ENCODE measurements at regions of chr4 and their contacts with region 1.

Region 1: DNA sequence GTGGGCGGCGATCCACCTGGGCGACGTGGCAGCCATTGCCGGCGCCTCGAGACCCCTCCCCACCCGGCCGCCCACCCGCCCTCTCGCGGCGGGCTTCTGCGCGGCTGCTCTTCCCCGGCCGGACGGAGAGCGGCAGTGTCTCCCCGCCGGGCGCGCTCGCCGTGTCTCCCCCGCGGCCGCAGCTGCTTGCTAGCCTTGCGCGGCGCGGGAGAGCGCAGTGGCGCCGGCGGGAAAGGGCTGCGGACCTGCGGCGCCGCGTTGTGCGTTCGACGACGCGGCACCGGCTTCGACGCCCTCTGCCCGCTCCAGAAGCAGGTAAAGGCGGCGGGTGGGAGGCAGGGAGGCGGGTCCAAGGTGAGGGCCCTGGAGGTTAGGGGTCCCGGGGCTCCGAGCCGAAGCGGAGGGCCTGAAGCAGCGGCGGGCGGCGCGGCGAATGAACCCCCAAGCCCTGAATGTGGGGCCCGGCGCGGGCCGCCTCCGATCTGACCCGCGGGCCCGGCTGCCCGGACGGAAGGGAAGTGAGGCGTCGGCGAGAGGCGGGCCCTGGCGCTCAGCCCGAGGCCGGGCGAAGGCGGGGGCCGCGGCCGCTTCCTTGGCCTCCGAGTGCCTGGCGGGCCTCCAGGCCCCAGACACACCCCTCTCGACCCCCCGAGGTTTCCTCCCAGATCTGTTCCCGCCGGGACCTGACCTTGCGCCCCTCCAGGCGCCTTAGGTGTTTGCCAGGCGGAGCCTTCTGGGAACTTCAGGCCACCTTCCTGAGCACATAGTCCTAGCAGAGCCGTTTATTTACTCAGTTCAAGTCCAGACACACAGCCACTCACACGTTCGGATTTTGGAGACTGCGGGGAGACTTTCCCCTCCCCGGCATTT is at the start of gene N4BP2:
- DNase-seq: peak; percentile 72 to 90
- H3K4me3 ChIP-seq: peak within 1 kb of the TSS; percentile 95 to 99
- H3K27ac ChIP-seq: peak within 1 kb of the TSS; percentile 97 to 100
- H3K4me1 ChIP-seq: peaks cover 0 to 28% (median 9%) of the 10 kb centered on the region in 4 donors
- H3K27me3 ChIP-seq: no peaks in the 10 kb centered on the region
- CTCF ChIP-seq: peak; percentile 52 to 84

Region 2: DNA sequence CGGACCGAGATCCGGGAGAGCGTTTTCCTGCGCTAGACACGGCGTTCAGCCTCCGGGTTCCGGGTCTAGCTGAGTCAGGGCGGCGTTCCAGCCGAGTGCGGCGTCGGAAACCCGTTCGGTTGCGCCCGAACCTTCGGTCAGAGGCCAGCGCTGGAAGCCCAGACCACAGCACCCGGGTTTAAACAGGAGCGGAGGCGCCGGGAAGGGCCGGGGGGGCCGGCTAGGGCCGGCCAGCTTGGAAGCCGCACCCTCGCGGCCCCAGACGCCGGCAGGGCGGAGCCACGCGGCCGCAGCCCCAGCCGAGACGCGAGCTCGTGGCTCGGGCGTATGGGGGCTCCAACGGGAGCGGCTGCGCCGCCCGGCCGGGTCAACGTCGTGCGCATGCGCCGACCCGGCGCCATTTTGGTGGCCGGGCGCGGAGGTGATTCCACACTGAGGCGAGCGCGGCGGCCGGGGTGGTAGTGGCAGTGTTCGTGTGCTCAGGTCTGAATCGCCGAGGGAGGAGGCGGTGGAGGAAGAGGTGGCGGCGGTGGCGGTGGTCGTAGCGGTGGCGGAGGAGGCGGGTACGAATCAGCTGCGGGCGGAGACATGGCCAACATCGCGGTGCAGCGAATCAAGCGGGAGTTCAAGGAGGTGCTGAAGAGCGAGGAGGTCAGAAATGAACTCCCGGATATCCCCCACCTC is 359.1 kb before region 1 on chr4 and contains the start of gene UBE2K:
- intact Hi-C with region 1: loop called (anchors 5 kb)
- DNase-seq: peak; percentile 80 to 94
- H3K4me3 ChIP-seq: peak within 1 kb of the TSS; percentile 84 to 95
- H3K27ac ChIP-seq: peak within 1 kb of the TSS; percentile 90 to 91
- H3K4me1 ChIP-seq: peaks cover 0 to 46% (median 7%) of the 10 kb centered on the region in 4 donors
- H3K27me3 ChIP-seq: no peaks in the 10 kb centered on the region
- CTCF ChIP-seq: no peak

Region 3: DNA sequence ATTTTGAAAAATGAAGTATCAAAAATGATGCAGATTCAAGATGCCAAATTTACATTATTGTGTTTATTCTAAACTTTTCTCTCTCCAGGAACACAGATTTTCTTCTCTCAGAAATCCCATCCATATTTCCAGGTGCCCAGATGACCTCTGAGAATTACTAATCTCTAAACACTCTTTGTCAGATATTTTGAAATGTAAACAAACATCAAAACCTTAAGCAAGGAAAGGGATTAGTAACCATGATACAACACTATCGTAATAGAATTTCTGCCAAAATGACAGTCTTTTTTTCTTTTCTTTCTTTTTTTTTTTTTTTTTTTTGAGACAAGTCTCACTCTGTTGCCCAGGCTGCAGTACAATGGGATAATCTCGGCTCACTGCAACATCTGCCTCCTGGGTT is 156.0 kb before region 1 on chr4:
- intact Hi-C with region 1: no loop called
- DNase-seq: no peak
- H3K4me3 ChIP-seq: no peak overlapping the region
- H3K27ac ChIP-seq: no peak overlapping the region
- H3K4me1 ChIP-seq: no peaks in the 10 kb centered on the region
- H3K27me3 ChIP-seq: no peaks in the 10 kb centered on the region
- CTCF ChIP-seq: no peak

Region 4: GRCh38 chr4:40309250-40309774 is 252.4 kb after region 1 on chr4:
- intact Hi-C with region 1: loop called (anchors 5 kb)
- DNase-seq: peak; percentile 87 to 93
- H3K4me3 ChIP-seq: no peak overlapping the region
- H3K27ac ChIP-seq: no peak overlapping the region
- H3K4me1 ChIP-seq: no peaks in the 10 kb centered on the region
- H3K27me3 ChIP-seq: no peaks in the 10 kb centered on the region
- CTCF ChIP-seq: peak; percentile 70 to 83

Region 5: DNA sequence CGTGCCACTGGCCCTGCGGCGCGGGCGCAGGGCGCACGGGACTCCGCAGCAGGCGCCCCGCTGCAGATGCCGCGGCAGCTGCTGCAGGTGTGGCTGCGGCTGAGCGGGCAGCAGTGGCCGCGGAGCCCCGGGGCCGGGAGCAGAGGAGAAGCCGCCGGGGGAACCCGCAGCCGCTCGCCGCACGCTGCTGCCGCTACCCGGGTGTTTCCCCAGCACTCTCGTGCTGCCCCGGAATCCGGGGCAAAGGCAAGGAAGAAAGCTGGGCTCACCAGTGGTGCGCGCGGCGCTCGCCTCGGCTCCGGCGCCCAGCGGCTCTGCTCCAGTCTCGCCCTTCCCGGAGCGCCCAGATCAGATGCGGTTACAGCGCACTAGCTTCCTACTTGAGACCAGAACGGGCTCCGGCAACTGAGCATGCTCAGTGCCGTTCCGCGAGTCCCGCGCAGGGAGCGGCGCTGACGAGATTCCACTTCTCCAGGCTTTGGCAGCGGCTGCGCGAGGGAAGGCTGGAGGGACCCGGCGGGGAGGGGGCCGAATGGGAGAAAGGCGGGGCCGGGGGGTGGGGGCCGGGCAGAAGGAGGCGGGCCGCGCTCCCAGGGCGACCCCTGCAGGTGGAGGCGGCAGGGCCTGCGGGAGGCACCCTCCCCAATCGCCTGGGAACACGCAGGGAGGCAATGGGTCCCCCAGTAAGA is 1157.3 kb after region 1 on chr4 and contains the start of gene APBB2:
- intact Hi-C with region 1: loop called (anchors 10 kb)
- DNase-seq: peak; percentile 95 to 97
- H3K4me3 ChIP-seq: peak within 1 kb of the TSS; percentile 96 to 97
- H3K27ac ChIP-seq: peak within 1 kb of the TSS; percentile 82 to 86
- H3K4me1 ChIP-seq: peaks cover 0 to 48% (median 15%) of the 10 kb centered on the region in 4 donors
- H3K27me3 ChIP-seq: no peaks in the 10 kb centered on the region
- CTCF ChIP-seq: peak; percentile 53 to 91

Measured in tibial artery (tissue), 4 donors.